GM12878 (cell line): ENCODE measurements at regions of chr19 and their contacts with region 1.

Region 1: GRCh38 chr19:34220472-34221063 is 33.8 kb upstream of the GARRE1 start:
- DNase-seq: no peak
- ATAC-seq: peak; percentile 60
- H3K4me3 ChIP-seq: no peak overlapping the region
- H3K27ac ChIP-seq: no peak overlapping the region
- H3K4me1 ChIP-seq: peaks cover 23% of the 10 kb centered on the region
- H3K27me3 ChIP-seq: no peaks in the 10 kb centered on the region
- CTCF ChIP-seq: peak; percentile 66 to 78 (median 66)
- EP300 ChIP-seq: no peak
- POLR2A ChIP-seq: no peak
- RAD21 ChIP-seq: peak; percentile 74

Region 2: GRCh38 chr19:34120846-34121639 is 99.5 kb before region 1 on chr19:
- CTCF ChIA-PET with region 1: interaction called, 3 read pairs
- POLR2A ChIA-PET with region 1: no interaction called
- RAD21 ChIA-PET with region 1: no interaction called
- SMC1A ChIA-PET with region 1: interaction called, 4 read pairs
- in situ Hi-C with region 1: no loop called
- intact Hi-C with region 1: loop called (anchors 10 kb)
- DNase-seq: no peak
- ATAC-seq: peak; percentile 74
- H3K4me3 ChIP-seq: no peak overlapping the region
- H3K27ac ChIP-seq: no peak overlapping the region
- H3K4me1 ChIP-seq: no peaks in the 10 kb centered on the region
- H3K27me3 ChIP-seq: no peaks in the 10 kb centered on the region; a peak in 1 of 4 replicates
- CTCF ChIP-seq: peak; percentile 72 to 79 (median 78)
- EP300 ChIP-seq: no peak
- POLR2A ChIP-seq: no peak
- RAD21 ChIP-seq: peak; percentile 63

Region 3: DNA sequence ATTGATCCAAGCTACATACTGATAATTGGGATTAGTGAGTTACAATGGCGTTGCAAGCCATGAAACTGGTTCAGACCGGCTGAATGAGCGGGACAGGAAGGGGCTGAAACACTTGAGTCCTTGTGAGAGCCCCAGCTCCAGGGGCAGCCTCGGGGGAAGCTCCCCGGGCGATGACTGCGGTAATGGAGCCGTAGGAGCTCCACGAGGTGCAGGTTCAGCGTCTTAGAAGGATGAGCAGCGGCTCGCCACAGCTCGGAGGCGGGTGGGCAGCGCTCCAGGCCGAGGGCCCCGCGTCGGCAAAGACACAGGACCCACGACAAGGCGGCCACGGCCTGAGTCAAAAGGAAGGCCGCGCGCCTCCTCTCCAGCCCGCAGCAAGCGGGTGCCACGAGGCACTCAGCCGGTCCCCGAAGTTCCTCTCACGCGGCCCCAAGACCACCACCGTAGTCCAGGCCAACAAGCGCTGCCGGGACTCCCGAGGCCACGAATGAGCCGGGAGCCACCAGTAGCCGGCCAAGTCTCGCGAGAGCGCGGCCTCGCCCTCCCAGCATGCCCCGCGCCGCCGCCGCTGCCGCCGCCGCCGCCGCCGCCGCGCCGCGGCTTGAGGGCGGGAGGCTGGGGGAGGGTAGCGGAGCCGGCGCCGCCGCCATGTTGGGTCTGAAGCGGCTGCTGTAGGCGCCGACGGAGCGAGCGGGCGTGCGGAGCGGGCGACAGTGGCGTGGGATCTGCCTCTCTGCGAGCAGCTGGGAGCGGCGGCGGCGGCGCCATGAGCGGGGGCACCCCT is 48.5 kb before region 1 on chr19 and contains the start of gene LSM14A:
- CTCF ChIA-PET with region 1: interaction called, 20 read pairs
- POLR2A ChIA-PET with region 1: interaction called, 9 read pairs
- RAD21 ChIA-PET with region 1: interaction called, 5 read pairs
- SMC1A ChIA-PET with region 1: interaction called, 5 read pairs
- in situ Hi-C with region 1: no loop called
- intact Hi-C with region 1: loop called (anchors 5 kb)
- DNase-seq: peak; percentile 33
- ATAC-seq: peak; percentile 76
- H3K4me3 ChIP-seq: peak within 1 kb of the TSS; percentile 80
- H3K27ac ChIP-seq: peak within 1 kb of the TSS; percentile 99
- H3K4me1 ChIP-seq: peaks cover 17% of the 10 kb centered on the region
- H3K27me3 ChIP-seq: no peaks in the 10 kb centered on the region
- CTCF ChIP-seq: no peak
- EP300 ChIP-seq: no peak
- POLR2A ChIP-seq: peak; percentile 96
- RAD21 ChIP-seq: no peak
- polyA plus RNA-seq, gene LSM14A: 21.9 to 31.1 TPM

Region 4: GRCh38 chr19:34178274-34178610 is 42.3 kb before region 1 on chr19:
- CTCF ChIA-PET with region 1: interaction called, 20 read pairs
- POLR2A ChIA-PET with region 1: interaction called, 9 read pairs
- RAD21 ChIA-PET with region 1: interaction called, 6 read pairs
- SMC1A ChIA-PET with region 1: interaction called, 5 read pairs
- in situ Hi-C with region 1: no loop called
- intact Hi-C with region 1: loop called (anchors 5 kb)
- DNase-seq: no peak
- ATAC-seq: peak; percentile 21
- H3K4me3 ChIP-seq: peak overlapping the region; percentile 42
- H3K27ac ChIP-seq: no peak overlapping the region
- H3K4me1 ChIP-seq: peaks cover 3% of the 10 kb centered on the region
- H3K27me3 ChIP-seq: no peaks in the 10 kb centered on the region
- CTCF ChIP-seq: no peak
- EP300 ChIP-seq: no peak
- POLR2A ChIP-seq: no peak
- RAD21 ChIP-seq: no peak

Region 5: GRCh38 chr19:34232566-34233481 is 12.3 kb after region 1 on chr19:
- CTCF ChIA-PET with region 1: interaction called, 20 read pairs
- POLR2A ChIA-PET with region 1: interaction called, 5 read pairs
- RAD21 ChIA-PET with region 1: interaction called, 3 read pairs
- SMC1A ChIA-PET with region 1: interaction called, 8 read pairs
- in situ Hi-C with region 1: no loop called
- intact Hi-C with region 1: no loop called
- DNase-seq: no peak
- ATAC-seq: peak; percentile 86
- H3K4me3 ChIP-seq: no peak overlapping the region; the same call in 1 of the 2 replicates
- H3K27ac ChIP-seq: peak overlapping the region; percentile 58; the same call in 1 of the 2 replicates
- H3K4me1 ChIP-seq: peaks cover 16% of the 10 kb centered on the region
- H3K27me3 ChIP-seq: no peaks in the 10 kb centered on the region
- CTCF ChIP-seq: no peak
- EP300 ChIP-seq: no peak
- POLR2A ChIP-seq: no peak
- RAD21 ChIP-seq: peak; percentile 6; the same call in 1 of the 2 replicates

Region 6: GRCh38 chr19:34359140-34359953 is 138.8 kb after region 1 on chr19:
- CTCF ChIA-PET with region 1: no interaction called
- POLR2A ChIA-PET with region 1: interaction called, 10 read pairs
- RAD21 ChIA-PET with region 1: no interaction called
- SMC1A ChIA-PET with region 1: no interaction called
- in situ Hi-C with region 1: no loop called
- intact Hi-C with region 1: no loop called
- DNase-seq: peak; percentile 99
- ATAC-seq: peak; percentile 98
- H3K4me3 ChIP-seq: peak overlapping the region; percentile 46; the same call in 1 of the 2 replicates
- H3K27ac ChIP-seq: peak overlapping the region; percentile 90
- H3K4me1 ChIP-seq: peaks cover 21% of the 10 kb centered on the region
- H3K27me3 ChIP-seq: no peaks in the 10 kb centered on the region
- CTCF ChIP-seq: peak; percentile 61 to 71 (median 67)
- EP300 ChIP-seq: peak; percentile 18 to 25; a peak in 1 of 4 replicates
- POLR2A ChIP-seq: peak; percentile 84
- RAD21 ChIP-seq: no peak